ENCODE measurements at regions of chr4 and their contacts with region 1.

Region 1: DNA sequence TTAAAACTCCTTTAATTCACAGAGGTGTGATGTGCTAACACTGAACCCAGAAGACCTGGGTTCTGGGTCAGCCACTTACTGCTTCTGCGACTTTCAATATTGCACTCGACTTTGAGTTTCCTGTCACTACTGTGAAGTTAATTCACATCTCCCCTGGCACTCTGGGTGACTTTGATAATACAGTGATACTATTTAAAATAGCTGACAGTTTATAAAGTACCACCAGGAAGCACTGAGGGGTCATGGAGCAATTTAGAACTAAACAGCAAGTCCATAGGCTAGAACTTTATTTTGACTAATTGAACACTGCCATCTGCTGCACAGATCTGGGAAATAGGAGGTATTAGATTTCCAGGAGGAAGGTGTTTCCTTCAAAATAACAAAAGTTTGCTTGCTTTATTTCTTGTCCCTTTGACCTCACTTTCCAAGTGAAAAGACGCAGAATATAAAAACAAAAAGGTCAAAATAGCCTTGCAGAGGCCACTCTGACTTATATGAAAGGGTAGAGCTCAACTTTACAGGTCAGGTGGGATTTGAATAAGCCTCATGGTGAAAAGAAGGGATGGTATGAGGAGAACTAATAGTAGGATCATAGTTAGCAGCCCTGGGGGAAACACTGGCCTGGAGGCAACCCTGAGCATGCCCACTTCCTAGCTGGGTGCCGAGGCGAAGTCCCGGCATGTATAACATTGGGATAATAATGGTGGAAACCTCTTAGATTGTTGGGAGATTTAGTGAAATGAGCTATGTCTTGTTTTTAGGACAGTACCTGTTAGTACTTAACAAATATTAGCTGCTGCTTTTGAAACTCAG is 53.4 kb downstream of the ZNF518B start:
- DNase-seq: peak in 5 of 9 donors; percentile 20 to 44 (median 34)
- ATAC-seq: peak; percentile 54
- H3K4me3 ChIP-seq: no peak overlapping the region
- H3K4me3 Mint-ChIP-seq: no peak overlapping the region
- H3K27ac ChIP-seq: no peak overlapping the region
- H3K27ac Mint-ChIP-seq: no peak overlapping the region
- H3K4me1 ChIP-seq: no peaks in the 10 kb centered on the region
- H3K4me1 Mint-ChIP-seq: no peaks in the 10 kb centered on the region
- H3K27me3 ChIP-seq: no peaks in the 10 kb centered on the region
- H3K27me3 Mint-ChIP-seq: no peaks in the 10 kb centered on the region

Region 2: DNA sequence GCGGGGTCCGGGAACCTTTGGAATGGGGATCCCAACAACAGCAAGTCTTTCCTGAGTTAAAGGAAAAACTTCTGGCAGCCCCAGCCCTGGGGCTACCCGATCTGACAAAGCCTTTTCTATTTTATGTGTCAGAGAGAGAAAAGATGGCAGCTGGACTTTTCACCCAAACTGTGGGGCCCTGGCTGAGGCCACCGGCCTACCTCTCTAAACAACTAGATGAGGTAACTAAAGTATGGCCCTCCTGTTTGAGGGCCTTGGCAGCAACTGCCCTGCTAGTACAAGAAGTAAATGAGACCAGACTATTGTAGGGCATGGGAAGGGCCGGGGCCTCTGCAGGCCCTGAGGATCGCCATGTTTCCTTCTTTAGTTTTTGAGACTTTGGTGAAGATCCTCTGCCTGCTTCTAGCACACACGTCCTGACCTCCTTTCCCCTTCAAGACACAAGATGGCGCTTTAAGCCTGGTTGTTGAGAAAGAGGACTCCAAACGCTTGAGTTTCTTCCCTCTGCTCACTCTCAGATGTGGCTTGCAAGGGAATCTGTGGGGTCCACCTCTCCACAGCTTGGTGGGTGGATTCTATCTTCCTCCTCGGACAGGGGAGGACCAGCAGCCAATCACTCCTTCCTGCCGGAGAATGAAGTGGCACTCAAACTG is 640.9 kb before region 1 on chr4:
- CTCF ChIA-PET with region 1: no interaction called
- POLR2A ChIA-PET with region 1: no interaction called
- intact Hi-C with region 1: loop called in 1 of 2 experiments (anchors 10 kb)
- DNase-seq: peak in 8 of 9 donors; percentile 5 to 56 (median 34)
- ATAC-seq: no peak
- H3K4me3 ChIP-seq: no peak overlapping the region
- H3K4me3 Mint-ChIP-seq: no peak overlapping the region
- H3K27ac ChIP-seq: no peak overlapping the region
- H3K27ac Mint-ChIP-seq: no peak overlapping the region
- H3K4me1 ChIP-seq: no peaks in the 10 kb centered on the region
- H3K4me1 Mint-ChIP-seq: no peaks in the 10 kb centered on the region
- H3K27me3 ChIP-seq: no peaks in the 10 kb centered on the region
- H3K27me3 Mint-ChIP-seq: peaks cover 11 to 35% (median 26%) of the 10 kb centered on the region in 5 donors

Region 3: GRCh38 chr4:10074767-10075105 is 329.1 kb before region 1 on chr4:
- CTCF ChIA-PET with region 1: no interaction called
- POLR2A ChIA-PET with region 1: no interaction called
- intact Hi-C with region 1: loop called in 1 of 2 experiments (anchors 1 kb)
- DNase-seq: no peak
- ATAC-seq: peak; percentile 37
- H3K4me3 ChIP-seq: no peak overlapping the region
- H3K4me3 Mint-ChIP-seq: no peak overlapping the region
- H3K27ac ChIP-seq: no peak overlapping the region
- H3K27ac Mint-ChIP-seq: peak overlapping the region in 5 of 9 donors; percentile 13 to 74 (median 33)
- H3K4me1 ChIP-seq: peaks cover 0 to 2% of the 10 kb centered on the region in 2 donors
- H3K4me1 Mint-ChIP-seq: peaks cover 0 to 8% (median 0%) of the 10 kb centered on the region in 7 donors
- H3K27me3 ChIP-seq: no peaks in the 10 kb centered on the region
- H3K27me3 Mint-ChIP-seq: no peaks in the 10 kb centered on the region

Region 4: GRCh38 chr4:10157478-10158332 is 246.1 kb before region 1 on chr4:
- CTCF ChIA-PET with region 1: interaction called, 21 read pairs
- POLR2A ChIA-PET with region 1: no interaction called
- intact Hi-C with region 1: loop called (anchors 1 kb)
- DNase-seq: peak in 7 of 9 donors; percentile 4 to 37 (median 32)
- ATAC-seq: peak; percentile 63
- H3K4me3 ChIP-seq: no peak overlapping the region
- H3K4me3 Mint-ChIP-seq: peak overlapping the region in 5 of 10 donors; percentile 19 to 48 (median 25)
- H3K27ac ChIP-seq: no peak overlapping the region
- H3K27ac Mint-ChIP-seq: peak overlapping the region in 7 of 9 donors; percentile 12 to 86 (median 60)
- H3K4me1 ChIP-seq: peaks cover 8 to 39% of the 10 kb centered on the region in 2 donors
- H3K4me1 Mint-ChIP-seq: peaks cover 14 to 57% (median 50%) of the 10 kb centered on the region in 7 donors
- H3K27me3 ChIP-seq: no peaks in the 10 kb centered on the region
- H3K27me3 Mint-ChIP-seq: no peaks in the 10 kb centered on the region

Region 5: DNA sequence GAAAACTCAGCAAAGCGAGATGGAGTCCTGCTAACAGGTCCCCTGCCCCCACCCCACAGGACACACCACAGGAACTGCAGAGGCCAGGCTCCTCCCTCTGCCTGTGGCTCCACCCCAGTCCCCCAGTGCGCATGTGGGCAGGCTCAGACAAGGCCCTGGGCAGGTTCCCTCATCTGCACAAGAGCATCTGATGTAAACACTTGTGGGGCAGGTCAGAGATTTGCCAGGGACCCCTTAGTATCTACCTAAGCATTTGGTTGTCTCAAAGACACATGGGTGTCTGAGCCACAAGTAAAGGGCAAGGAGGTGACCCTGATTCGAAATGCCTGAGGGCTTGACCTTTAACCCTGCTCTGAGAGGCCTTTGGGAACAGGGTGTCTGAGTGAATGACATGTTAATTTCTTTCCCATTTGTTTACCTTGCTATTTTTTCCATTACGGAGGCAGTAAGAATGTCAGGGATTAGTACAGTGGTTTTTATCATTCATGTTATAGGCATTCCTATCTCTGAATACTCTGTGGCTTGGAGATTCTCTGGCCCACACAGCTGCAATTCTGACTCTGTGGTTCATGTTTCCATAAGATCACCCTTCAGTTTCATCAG is 31.9 kb before region 1 on chr4:
- CTCF ChIA-PET with region 1: no interaction called
- POLR2A ChIA-PET with region 1: no interaction called
- intact Hi-C with region 1: no loop called
- DNase-seq: no peak
- ATAC-seq: no peak
- H3K4me3 ChIP-seq: no peak overlapping the region
- H3K4me3 Mint-ChIP-seq: no peak overlapping the region
- H3K27ac ChIP-seq: no peak overlapping the region
- H3K27ac Mint-ChIP-seq: no peak overlapping the region
- H3K4me1 ChIP-seq: no peaks in the 10 kb centered on the region
- H3K4me1 Mint-ChIP-seq: no peaks in the 10 kb centered on the region
- H3K27me3 ChIP-seq: no peaks in the 10 kb centered on the region
- H3K27me3 Mint-ChIP-seq: peaks cover 0 to 7% (median 0%) of the 10 kb centered on the region in 5 donors

Measured in naive thymus-derived CD4-positive, alpha-beta T cell (primary cell).